ENCODE measurements at regions of chr4 and their contacts with region 1.

Region 1: GRCh38 chr4:28879178-28879577 is 1841.0 kb upstream of the PCDH7 start:
- DNase-seq: no peak
- ATAC-seq: no peak
- H3K4me3 ChIP-seq: no peak overlapping the region
- H3K27ac ChIP-seq: no peak overlapping the region
- H3K4me1 ChIP-seq: no peaks in the 10 kb centered on the region
- H3K27me3 ChIP-seq: no peaks in the 10 kb centered on the region
- CTCF ChIP-seq: no peak

Region 2: GRCh38 chr4:28686618-28687017 is 192.6 kb before region 1 on chr4:
- intact Hi-C with region 1: no loop called
- DNase-seq: peak; percentile 7 to 9
- ATAC-seq: peak in 2 of 8 donors; percentile 26 to 35
- H3K4me3 ChIP-seq: no peak overlapping the region
- H3K27ac ChIP-seq: no peak overlapping the region
- H3K4me1 ChIP-seq: no peaks in the 10 kb centered on the region
- H3K27me3 ChIP-seq: no peaks in the 10 kb centered on the region
- CTCF ChIP-seq: peak in 8 of 9 donors; percentile 25 to 54 (median 48)

Region 3: GRCh38 chr4:28890949-28891775 is 12.0 kb after region 1 on chr4:
- intact Hi-C with region 1: loop called in 1 of 10 experiments (anchors 1 kb)
- DNase-seq: no peak
- ATAC-seq: no peak
- H3K4me3 ChIP-seq: no peak overlapping the region
- H3K27ac ChIP-seq: no peak overlapping the region
- H3K4me1 ChIP-seq: no peaks in the 10 kb centered on the region
- H3K27me3 ChIP-seq: no peaks in the 10 kb centered on the region
- CTCF ChIP-seq: no peak

Measured in heart right ventricle (tissue), 16 donors.